CD8-positive, alpha-beta T cell (primary cell): ENCODE measurements at regions of chr11 and their contacts with region 1.

Region 1: GRCh38 chr11:119196833-119197483 is 9.2 kb upstream of the CBL start:
- DNase-seq: peak; percentile 44 to 87 (median 68)
- ATAC-seq: peak; percentile 97
- H3K4me3 ChIP-seq: no peak overlapping the region
- H3K4me3 Mint-ChIP-seq: no peak overlapping the region
- H3K27ac ChIP-seq: no peak overlapping the region
- H3K27ac Mint-ChIP-seq: no peak overlapping the region
- H3K4me1 ChIP-seq: no peaks in the 10 kb centered on the region
- H3K4me1 Mint-ChIP-seq: peaks cover 4% of the 10 kb centered on the region
- H3K27me3 ChIP-seq: no peaks in the 10 kb centered on the region
- H3K27me3 Mint-ChIP-seq: no peaks in the 10 kb centered on the region
- CTCF ChIP-seq: peak; percentile 81

Region 2: DNA sequence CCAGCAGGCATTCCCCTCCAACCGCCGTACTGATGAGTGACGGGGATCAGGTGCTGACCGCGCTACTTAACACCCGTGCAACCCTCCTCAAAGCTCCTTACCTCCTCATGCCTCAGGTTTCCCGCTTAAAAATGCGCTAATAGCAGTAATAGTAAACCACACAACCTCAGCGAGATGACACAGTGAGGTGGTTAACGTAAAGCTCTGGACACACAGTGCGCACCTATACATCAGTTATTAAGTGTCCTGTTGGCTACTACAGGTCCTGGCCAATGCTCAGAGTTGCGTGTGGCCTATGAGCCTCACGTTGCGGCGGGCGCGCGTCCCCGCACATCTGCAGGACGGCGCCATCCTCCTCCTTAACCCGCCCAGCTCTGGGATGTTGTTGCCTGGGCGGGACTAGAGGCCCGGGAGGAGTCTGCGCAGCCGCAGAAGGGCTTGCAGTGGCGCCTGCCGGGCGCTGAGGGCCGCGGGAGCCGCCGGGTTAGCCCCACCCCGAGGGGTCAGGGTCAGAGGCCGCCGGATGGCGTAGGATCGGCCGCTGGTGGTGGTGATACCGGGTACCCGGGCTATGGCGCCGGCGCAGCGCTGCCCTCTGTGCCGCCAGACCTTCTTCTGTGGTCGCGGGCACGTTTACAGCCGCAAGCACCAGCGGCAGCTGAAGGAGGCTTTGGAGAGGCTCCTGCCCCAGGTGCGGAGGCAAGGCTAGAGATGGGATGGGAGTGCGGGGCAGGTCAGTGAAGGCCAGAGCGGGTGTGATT is 199.2 kb before region 1 on chr11 and contains the start of gene CENATAC:
- CTCF ChIA-PET with region 1: interaction called, 4 read pairs
- POLR2A ChIA-PET with region 1: no interaction called
- intact Hi-C with region 1: loop called in 1 of 2 experiments (anchors 2 kb)
- DNase-seq: peak; percentile 87 to 97 (median 96)
- ATAC-seq: peak; percentile 94
- H3K4me3 ChIP-seq: peak within 1 kb of the TSS; percentile 89 to 95
- H3K4me3 Mint-ChIP-seq: peak within 1 kb of the TSS; percentile 84
- H3K27ac ChIP-seq: peak within 1 kb of the TSS; percentile 59 to 92
- H3K27ac Mint-ChIP-seq: peak within 1 kb of the TSS; percentile 88
- H3K4me1 ChIP-seq: peaks cover 23% of the 10 kb centered on the region
- H3K4me1 Mint-ChIP-seq: peaks cover 36% of the 10 kb centered on the region
- H3K27me3 ChIP-seq: no peaks in the 10 kb centered on the region
- H3K27me3 Mint-ChIP-seq: no peaks in the 10 kb centered on the region
- CTCF ChIP-seq: no peak
- total RNA-seq, gene CENATAC: 103 to 116 TPM

Region 3: DNA sequence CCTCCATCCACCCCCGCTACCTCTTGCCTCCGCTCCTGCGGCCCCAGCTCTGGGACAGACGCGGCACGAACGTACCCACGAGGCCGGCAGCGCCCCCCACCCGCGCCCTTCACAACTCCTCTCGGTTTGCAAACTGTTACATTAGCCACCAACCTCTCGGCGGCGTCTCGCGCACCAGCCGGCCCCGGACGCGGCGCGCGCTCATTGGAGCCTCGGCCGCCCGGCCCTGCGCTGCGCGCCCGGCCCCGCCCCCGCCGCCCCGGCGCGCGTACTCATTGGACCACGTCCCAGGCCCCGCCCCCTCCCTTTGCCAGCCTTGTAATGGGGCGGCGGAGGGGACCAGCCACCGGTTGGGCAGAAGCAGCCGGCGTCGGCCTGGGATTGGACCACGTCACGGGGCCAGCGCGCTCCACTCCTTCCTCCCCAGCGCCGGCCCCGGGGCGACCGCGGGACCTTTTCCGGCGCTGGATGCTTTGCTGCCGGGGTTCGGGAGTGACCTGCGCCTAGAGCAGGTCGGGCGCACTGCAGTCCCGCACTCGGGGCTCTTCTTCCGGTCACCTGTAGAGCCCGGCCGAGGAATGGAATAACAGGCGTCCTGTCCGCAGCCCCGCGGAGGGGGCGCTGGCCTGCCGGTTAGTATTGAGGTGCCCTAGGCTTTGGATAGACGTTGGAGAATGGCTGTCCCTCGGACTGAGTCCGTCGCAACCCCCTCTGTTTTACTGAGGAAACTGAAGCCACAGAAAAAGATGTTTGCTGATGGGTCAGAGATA is 139.8 kb before region 1 on chr11 and contains the start of gene HYOU1:
- CTCF ChIA-PET with region 1: interaction called, 3 read pairs
- POLR2A ChIA-PET with region 1: no interaction called
- intact Hi-C with region 1: loop called (anchors 2 kb)
- DNase-seq: peak; percentile 97 to 99 (median 98)
- ATAC-seq: peak; percentile 96
- H3K4me3 ChIP-seq: peak within 1 kb of the TSS; percentile 82 to 83
- H3K4me3 Mint-ChIP-seq: peak within 1 kb of the TSS; percentile 96
- H3K27ac ChIP-seq: peak within 1 kb of the TSS; percentile 81 to 85
- H3K27ac Mint-ChIP-seq: peak within 1 kb of the TSS; percentile 96
- H3K4me1 ChIP-seq: peaks cover 21% of the 10 kb centered on the region
- H3K4me1 Mint-ChIP-seq: peaks cover 35% of the 10 kb centered on the region
- H3K27me3 ChIP-seq: no peaks in the 10 kb centered on the region
- H3K27me3 Mint-ChIP-seq: no peaks in the 10 kb centered on the region
- CTCF ChIP-seq: no peak
- total RNA-seq, gene HYOU1: 106 to 109 TPM

Region 4: DNA sequence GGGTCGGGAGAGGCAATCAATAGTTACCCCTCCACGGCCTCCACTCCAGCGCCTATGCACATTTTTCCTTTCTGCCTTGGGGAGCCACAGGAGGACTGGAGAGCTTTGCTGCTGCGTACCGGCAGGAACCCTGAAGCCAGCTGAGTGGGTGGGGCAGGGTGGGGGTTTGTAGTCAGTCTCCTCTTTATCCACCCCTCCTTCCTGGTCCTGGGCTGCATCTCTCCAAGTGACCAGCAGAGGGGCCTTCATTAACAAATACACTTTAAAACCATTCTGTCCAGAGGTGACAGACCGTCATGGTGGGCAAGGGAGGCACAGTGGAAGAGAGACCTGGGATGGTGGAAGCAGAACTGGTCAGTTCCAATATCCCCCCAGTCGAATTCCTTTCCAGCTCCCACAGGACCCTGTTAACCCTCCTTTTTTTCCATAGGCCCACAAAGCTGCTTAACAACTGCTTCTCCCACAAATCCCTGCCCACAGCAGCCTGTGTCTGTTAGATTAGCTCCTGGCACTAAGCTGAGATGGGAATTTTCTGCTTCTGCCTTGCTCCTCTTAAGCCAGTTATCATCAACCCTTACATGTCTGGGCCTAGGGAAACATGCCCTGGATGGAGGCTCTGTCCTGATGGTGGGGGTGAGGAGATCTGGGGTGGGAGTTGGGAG is 52.0 kb before region 1 on chr11:
- CTCF ChIA-PET with region 1: no interaction called
- POLR2A ChIA-PET with region 1: no interaction called
- intact Hi-C with region 1: loop called in 1 of 2 experiments (anchors 10 kb)
- DNase-seq: peak in 3 of 9 experiments; percentile 32 to 51 (median 39)
- ATAC-seq: peak; percentile 39
- H3K4me3 ChIP-seq: no peak overlapping the region
- H3K4me3 Mint-ChIP-seq: no peak overlapping the region
- H3K27ac ChIP-seq: no peak overlapping the region
- H3K27ac Mint-ChIP-seq: no peak overlapping the region
- H3K4me1 ChIP-seq: peaks cover 21% of the 10 kb centered on the region
- H3K4me1 Mint-ChIP-seq: peaks cover 13% of the 10 kb centered on the region
- H3K27me3 ChIP-seq: peaks cover 0 to 14% of the 10 kb centered on the region in 2 experiments
- H3K27me3 Mint-ChIP-seq: peaks cover 38% of the 10 kb centered on the region
- CTCF ChIP-seq: no peak

Region 5: GRCh38 chr11:119168471-119169281 is 28.3 kb before region 1 on chr11 and contains the start of gene NLRX1:
- CTCF ChIA-PET with region 1: interaction called, 14 read pairs
- POLR2A ChIA-PET with region 1: interaction called, 3 read pairs
- intact Hi-C with region 1: loop called (anchors 1 kb)
- DNase-seq: peak; percentile 70 to 90 (median 81)
- ATAC-seq: peak; percentile 99
- H3K4me3 ChIP-seq: peak within 1 kb of the TSS; percentile 61 to 70
- H3K4me3 Mint-ChIP-seq: peak within 1 kb of the TSS; percentile 87
- H3K27ac ChIP-seq: peak within 1 kb of the TSS; percentile 60 to 69
- H3K27ac Mint-ChIP-seq: peak within 1 kb of the TSS; percentile 81
- H3K4me1 ChIP-seq: peaks cover 6% of the 10 kb centered on the region
- H3K4me1 Mint-ChIP-seq: no peaks in the 10 kb centered on the region
- H3K27me3 ChIP-seq: no peaks in the 10 kb centered on the region
- H3K27me3 Mint-ChIP-seq: no peaks in the 10 kb centered on the region
- CTCF ChIP-seq: peak; percentile 80
- total RNA-seq, gene NLRX1: 5.1 TPM

Region 6: DNA sequence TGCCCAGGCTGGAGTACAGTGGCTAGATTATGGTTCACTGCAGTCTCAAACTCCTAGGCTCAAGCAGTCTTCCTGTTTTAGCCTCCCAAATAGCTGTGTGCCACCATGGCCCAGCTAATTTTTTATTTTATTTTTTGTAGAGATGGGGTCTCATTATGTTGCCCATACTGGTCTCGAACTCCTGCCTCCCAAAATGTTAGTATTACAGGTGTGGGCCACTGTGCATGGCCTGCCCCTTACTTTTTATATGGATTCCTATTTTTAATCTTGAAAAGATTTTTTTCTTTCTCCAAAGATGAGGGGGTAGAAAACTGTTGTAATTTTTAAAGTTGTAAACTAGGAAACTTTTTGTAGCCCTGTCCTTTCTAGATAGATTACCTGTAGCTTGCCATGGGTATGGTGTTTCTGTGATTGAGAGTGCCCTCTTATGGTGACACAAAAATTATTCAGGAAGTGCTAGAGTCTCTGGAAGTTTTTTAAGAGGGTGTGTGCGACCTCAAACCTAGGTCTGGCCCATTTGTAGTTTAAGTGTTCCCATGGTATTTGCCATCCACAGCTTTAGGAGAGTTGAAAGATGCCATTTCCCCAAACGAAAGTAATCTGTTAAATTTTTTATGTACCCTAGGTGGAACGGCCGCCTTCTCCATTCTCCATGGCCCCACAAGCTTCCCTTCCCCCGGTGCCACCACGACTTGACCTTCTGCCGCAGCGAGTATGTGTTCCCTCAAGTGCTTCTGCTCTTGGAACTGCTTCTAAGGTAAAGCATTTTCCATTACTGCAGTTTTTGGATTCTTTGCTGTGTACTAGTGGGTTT is 87.6 kb after region 1 on chr11:
- CTCF ChIA-PET with region 1: interaction called, 59 read pairs
- POLR2A ChIA-PET with region 1: interaction called, 3 read pairs
- intact Hi-C with region 1: no loop called
- DNase-seq: peak in 2 of 9 experiments; percentile 62 to 78
- ATAC-seq: peak; percentile 96
- H3K4me3 ChIP-seq: no peak overlapping the region
- H3K4me3 Mint-ChIP-seq: no peak overlapping the region
- H3K27ac ChIP-seq: no peak overlapping the region
- H3K27ac Mint-ChIP-seq: peak overlapping the region; percentile 7
- H3K4me1 ChIP-seq: peaks cover 18% of the 10 kb centered on the region
- H3K4me1 Mint-ChIP-seq: peaks cover 34% of the 10 kb centered on the region
- H3K27me3 ChIP-seq: no peaks in the 10 kb centered on the region
- H3K27me3 Mint-ChIP-seq: no peaks in the 10 kb centered on the region
- CTCF ChIP-seq: peak; percentile 59